Adrenal gland (tissue), 19 donors: ENCODE measurements at regions of chr17 and their contacts with region 1.

Region 1: GRCh38 chr17:48131216-48131824 is 23.8 kb downstream of the SNX11 start:
- DNase-seq: peak; percentile 45 to 79 (median 65)
- H3K4me3 ChIP-seq: no peak overlapping the region
- H3K27ac ChIP-seq: no peak overlapping the region
- H3K4me1 ChIP-seq: no peaks in the 10 kb centered on the region
- H3K27me3 ChIP-seq: no peaks in the 10 kb centered on the region
- CTCF ChIP-seq: peak; percentile 68 to 87 (median 84)
- POLR2A ChIP-seq: no peak

Region 2: DNA sequence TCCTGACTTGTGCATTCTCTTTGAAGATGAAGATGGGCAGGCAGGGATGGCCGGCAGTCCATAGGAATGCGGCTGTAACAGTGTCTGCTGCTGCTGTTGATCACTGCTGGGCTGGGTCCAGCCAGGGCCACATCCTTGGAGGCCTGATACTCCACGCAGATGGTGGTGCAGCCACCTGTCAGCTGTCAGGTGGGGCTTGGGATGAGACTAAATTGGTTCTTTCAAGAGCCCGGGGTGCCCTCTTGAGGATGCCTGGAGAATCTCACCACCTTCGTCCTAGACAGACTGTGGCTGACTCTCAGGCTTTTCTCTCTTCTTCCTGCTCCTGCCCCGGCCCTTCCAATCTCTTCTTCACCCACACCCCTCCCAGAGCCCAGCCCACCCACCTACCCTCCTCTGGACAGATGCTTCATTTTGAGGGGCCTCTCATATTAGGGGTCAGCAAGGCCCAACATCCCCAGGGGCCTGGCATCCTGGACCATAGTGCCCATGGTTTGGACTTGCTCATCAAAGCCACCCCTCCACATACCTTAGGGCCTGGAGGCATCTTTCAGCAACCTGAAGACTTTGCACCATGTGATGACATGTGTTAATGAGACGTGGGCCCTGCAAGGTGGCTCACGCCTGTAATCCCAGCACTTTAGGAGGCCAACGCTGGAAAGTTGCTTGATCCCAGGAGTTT is 328.8 kb before region 1 on chr17:
- intact Hi-C with region 1: no loop called
- DNase-seq: peak; percentile 46 to 73 (median 54)
- H3K4me3 ChIP-seq: no peak overlapping the region
- H3K27ac ChIP-seq: no peak overlapping the region
- H3K4me1 ChIP-seq: no peaks in the 10 kb centered on the region
- H3K27me3 ChIP-seq: peaks cover 2% of the 10 kb centered on the region
- CTCF ChIP-seq: peak; percentile 27 to 60 (median 48)
- POLR2A ChIP-seq: no peak

Region 3: GRCh38 chr17:48024937-48025906 is 106.1 kb before region 1 on chr17:
- intact Hi-C with region 1: loop called (anchors 5 kb)
- DNase-seq: peak; percentile 98 to 99 (median 99)
- H3K4me3 ChIP-seq: peak overlapping the region in 2 of 4 donors; percentile 30 to 59
- H3K27ac ChIP-seq: peak overlapping the region; percentile 64 to 93 (median 84)
- H3K4me1 ChIP-seq: peaks cover 30 to 37% of the 10 kb centered on the region in 2 donors
- H3K27me3 ChIP-seq: no peaks in the 10 kb centered on the region
- CTCF ChIP-seq: peak; percentile 67 to 92 (median 82)
- POLR2A ChIP-seq: peak in 1 of 2 donors; percentile 85

Region 4: GRCh38 chr17:48074315-48075081 is 56.8 kb before region 1 on chr17:
- intact Hi-C with region 1: loop called in 1 of 2 experiments (anchors 5 kb)
- DNase-seq: peak; percentile 81 to 96 (median 86)
- H3K4me3 ChIP-seq: no peak overlapping the region
- H3K27ac ChIP-seq: peak overlapping the region in 2 of 5 donors; percentile 35 to 89
- H3K4me1 ChIP-seq: peaks cover 0 to 7% of the 10 kb centered on the region in 2 donors
- H3K27me3 ChIP-seq: no peaks in the 10 kb centered on the region
- CTCF ChIP-seq: peak; percentile 77 to 95 (median 92)
- POLR2A ChIP-seq: no peak

Region 5: DNA sequence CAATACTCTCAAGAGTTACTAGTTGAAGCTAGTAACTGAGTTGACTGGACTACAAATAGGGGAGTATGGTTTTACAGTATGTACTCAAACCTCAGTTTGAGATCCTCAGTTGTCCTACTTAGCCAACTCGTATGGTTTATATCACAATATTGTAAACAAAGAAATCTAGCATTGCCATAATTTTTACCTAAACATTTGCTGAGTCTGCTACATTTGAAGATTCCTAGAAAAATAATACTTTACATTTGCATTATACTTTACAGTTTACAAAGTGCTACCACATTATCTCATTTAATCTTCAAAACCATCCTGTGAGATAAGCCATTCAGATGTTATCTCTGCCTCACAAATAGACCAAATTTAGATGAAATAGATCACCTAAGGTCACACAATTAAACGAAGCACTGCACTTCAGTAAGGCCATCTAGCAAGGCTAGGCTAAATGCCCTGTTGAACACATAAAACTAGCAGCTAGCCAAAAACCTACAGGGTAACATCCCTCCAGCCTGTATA is 46.3 kb before region 1 on chr17:
- intact Hi-C with region 1: loop called in 1 of 2 experiments (anchors 5 kb)
- DNase-seq: no peak
- H3K4me3 ChIP-seq: no peak overlapping the region
- H3K27ac ChIP-seq: no peak overlapping the region
- H3K4me1 ChIP-seq: peaks cover 7 to 15% of the 10 kb centered on the region in 2 donors
- H3K27me3 ChIP-seq: no peaks in the 10 kb centered on the region
- CTCF ChIP-seq: no peak
- POLR2A ChIP-seq: no peak